Astrocyte of the cerebellum (primary cell): ENCODE measurements at regions of chr1 and their contacts with region 1.

Region 1: GRCh38 chr1:171061425-171062143 is 29.1 kb upstream of the FMO3 start:
- DNase-seq: no peak
- H3K4me3 ChIP-seq: no peak overlapping the region
- CTCF ChIP-seq: no peak

Region 2: DNA sequence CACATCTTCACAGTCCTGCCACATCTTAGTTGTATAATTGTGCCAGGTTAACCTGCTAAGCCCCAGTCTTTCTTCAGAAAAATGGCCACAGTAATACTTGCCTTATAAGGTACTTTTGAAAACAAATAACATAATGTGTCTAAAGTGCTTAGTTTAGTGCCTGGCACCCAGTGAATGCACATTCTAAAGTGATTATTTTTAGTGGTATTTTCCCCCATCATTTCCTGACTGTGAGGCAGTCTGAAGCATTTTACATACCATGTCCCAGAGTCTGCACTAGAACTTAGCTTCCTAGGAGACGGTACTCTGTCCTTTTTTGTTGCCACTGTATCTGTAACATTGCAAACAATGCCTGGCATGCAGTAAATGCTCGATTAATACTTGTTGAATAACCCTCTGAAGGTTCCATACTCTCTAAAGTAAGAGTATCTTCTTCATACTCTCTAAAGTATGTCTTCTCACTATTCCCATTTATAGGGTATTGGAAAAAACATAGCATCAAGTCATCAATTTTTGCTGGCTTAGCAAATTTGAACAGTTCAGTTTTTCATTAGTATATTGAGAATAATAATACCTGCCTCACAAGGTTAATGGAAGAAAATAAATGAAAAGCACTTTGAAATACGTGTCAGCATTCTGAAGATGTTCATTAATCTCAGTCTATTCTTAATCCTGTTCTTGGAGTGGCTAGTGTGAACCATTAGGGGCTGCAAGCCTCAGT is 72.8 kb after region 1 on chr1:
- in situ Hi-C with region 1: no loop called
- DNase-seq: no peak
- H3K4me3 ChIP-seq: no peak overlapping the region
- CTCF ChIP-seq: no peak

Region 3: DNA sequence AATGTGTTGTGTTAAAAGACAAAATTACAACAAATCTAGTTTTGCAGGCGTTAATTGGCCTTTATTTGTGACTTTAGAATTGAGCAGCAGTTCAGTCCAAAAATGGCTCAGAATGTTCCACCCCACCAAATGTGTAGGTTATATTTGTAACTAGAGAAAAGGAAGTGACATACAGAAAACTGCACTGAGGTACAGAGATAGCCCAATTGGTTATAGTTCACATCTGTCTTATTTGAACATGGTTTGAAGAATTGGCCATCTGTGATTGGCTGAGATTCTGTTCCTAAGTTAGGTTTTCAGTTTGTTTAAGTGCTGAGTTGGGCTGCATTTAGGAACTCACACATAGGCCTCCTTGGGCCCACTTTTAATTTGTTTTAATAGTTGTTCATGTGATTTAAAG is 111.5 kb after region 1 on chr1:
- in situ Hi-C with region 1: loop called (anchors 5 kb)
- DNase-seq: no peak
- H3K4me3 ChIP-seq: no peak overlapping the region
- CTCF ChIP-seq: no peak